Pancreas (tissue), 10 donors: ENCODE measurements at regions of chr10 and their contacts with region 1.

Region 1: DNA sequence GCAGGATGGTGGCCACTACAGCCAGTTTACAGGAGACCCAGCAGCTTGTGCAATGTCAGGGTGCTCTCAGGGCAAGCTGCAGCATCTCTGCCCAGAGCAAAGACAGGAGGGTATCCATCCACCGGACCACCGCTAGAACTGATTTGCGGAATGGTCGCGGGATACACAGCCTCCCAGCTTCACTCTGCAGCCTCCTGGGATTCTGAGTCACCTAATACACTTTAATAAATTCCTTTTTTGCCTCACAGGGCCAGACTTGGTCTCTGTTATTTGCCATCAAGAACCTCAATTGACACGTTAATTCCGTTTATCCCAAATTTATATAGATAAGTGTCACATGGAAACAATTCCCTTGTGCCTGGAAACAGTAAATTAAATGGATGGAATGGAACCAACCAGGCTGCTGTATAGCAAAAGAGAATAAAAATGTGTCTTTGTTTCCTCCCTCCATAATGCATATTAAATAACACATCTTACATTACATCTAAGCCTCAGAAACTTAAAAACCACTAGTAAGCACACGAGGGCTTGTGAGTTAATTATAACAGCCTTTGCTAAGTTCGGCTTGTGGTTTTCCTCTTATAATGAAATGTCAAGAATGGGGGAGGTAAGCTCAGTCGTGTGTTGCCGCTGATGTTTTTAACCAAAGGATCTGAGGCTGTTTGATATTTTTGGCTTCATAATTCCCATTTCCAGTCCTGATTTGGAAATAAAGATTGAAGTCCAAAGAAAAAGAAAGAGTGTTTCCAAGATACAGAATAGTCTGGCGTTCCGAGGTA is 52.1 kb downstream of the ADRB1 start:
- DNase-seq: no peak
- ATAC-seq: no peak
- H3K4me3 ChIP-seq: no peak overlapping the region
- H3K27ac ChIP-seq: no peak overlapping the region
- H3K4me1 ChIP-seq: no peaks in the 10 kb centered on the region
- H3K27me3 ChIP-seq: no peaks in the 10 kb centered on the region
- CTCF ChIP-seq: no peak

Region 2: GRCh38 chr10:113802997-113803396 is 292.8 kb before region 1 on chr10:
- intact Hi-C with region 1: loop called in 2 of 3 experiments (anchors 5 kb)
- DNase-seq: no peak
- ATAC-seq: peak in 3 of 4 donors; percentile 45 to 54 (median 45)
- H3K4me3 ChIP-seq: no peak overlapping the region
- H3K27ac ChIP-seq: peak overlapping the region in 2 of 4 donors; percentile 4 to 33
- H3K4me1 ChIP-seq: no peaks in the 10 kb centered on the region
- H3K27me3 ChIP-seq: no peaks in the 10 kb centered on the region
- CTCF ChIP-seq: no peak

Region 3: GRCh38 chr10:113866551-113867394 is 229.0 kb before region 1 on chr10:
- intact Hi-C with region 1: no loop called
- DNase-seq: no peak
- ATAC-seq: no peak
- H3K4me3 ChIP-seq: no peak overlapping the region
- H3K27ac ChIP-seq: no peak overlapping the region
- H3K4me1 ChIP-seq: peaks cover 10 to 13% (median 10%) of the 10 kb centered on the region in 3 donors
- H3K27me3 ChIP-seq: no peaks in the 10 kb centered on the region
- CTCF ChIP-seq: no peak

Region 4: DNA sequence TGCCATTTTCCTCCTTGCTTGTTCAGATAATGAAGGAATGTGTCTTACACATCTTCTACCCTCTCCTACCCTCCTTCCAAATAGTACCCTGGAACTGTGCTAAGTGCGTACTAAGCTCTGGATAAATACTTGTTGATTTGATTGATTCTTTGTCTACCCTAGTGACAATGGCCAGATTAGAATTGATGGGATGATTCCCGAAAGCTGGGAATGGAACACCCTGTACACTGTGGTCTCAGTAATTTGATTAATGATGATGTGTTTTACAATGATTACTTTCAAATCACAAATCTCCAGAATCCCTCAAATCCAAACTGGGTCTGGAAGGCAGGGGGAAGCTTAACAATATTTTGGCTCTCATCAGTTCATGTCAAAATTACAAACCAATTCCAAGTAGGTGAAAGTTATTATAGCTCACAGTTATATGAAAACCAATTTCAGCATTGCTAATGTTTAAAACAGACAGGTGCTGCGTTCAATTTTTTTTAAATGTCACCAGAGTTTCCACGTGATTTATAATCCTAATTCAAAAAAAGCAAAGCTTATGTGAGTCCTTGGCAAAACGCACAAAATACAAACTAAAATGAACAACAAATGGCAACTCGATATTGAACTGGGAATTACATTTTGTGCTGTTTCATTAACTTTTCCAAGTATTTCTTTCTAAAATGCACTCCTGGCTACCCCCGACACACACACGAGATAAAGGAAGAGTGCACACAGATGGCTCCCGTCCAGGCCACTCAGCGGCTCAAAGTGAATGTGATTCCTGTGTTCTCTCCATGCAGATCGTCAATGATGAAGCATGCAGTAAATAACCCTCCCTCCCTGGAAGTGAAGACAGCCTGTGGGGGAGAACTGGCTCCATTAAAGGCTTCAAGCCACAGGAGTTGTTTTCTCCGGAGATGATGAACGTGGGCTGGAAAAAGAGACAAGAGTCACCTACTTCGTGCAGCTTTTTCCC is 73.7 kb before region 1 on chr10:
- intact Hi-C with region 1: no loop called
- DNase-seq: no peak
- ATAC-seq: peak in 1 of 4 donors; percentile 36
- H3K4me3 ChIP-seq: no peak overlapping the region
- H3K27ac ChIP-seq: peak overlapping the region in 1 of 4 donors; percentile 18
- H3K4me1 ChIP-seq: peaks cover 0 to 2% (median 0%) of the 10 kb centered on the region in 3 donors
- H3K27me3 ChIP-seq: no peaks in the 10 kb centered on the region
- CTCF ChIP-seq: no peak